ENCODE measurements at regions of chr7 and their contacts with region 1.

Region 1: GRCh38 chr7:142827951-142828500 is 26.9 kb upstream of the EPHB6 start:
- DNase-seq: no peak
- H3K4me3 ChIP-seq: no peak overlapping the region
- H3K27ac ChIP-seq: no peak overlapping the region
- H3K4me1 ChIP-seq: no peaks in the 10 kb centered on the region
- H3K27me3 ChIP-seq: peaks cover 2 to 21% of the 10 kb centered on the region in 2 experiments
- CTCF ChIP-seq: no peak
- POLR2A ChIP-seq: no peak

Region 2: GRCh38 chr7:142535123-142535779 is 292.8 kb before region 1 on chr7:
- CTCF ChIA-PET with region 1: no interaction called
- POLR2A ChIA-PET with region 1: no interaction called
- dilution Hi-C with region 1: no loop called
- intact Hi-C with region 1: no loop called
- DNase-seq: peak; percentile 86
- H3K4me3 ChIP-seq: no peak overlapping the region
- H3K27ac ChIP-seq: peak overlapping the region; percentile 46
- H3K4me1 ChIP-seq: peaks cover 37% of the 10 kb centered on the region
- H3K27me3 ChIP-seq: no peaks in the 10 kb centered on the region
- CTCF ChIP-seq: peak; percentile 87 to 90
- POLR2A ChIP-seq: peak; percentile 45

Region 3: GRCh38 chr7:142646386-142647140 is 181.5 kb before region 1 on chr7:
- CTCF ChIA-PET with region 1: no interaction called
- POLR2A ChIA-PET with region 1: no interaction called
- dilution Hi-C with region 1: no loop called
- intact Hi-C with region 1: loop called (anchors 5 kb)
- DNase-seq: no peak
- H3K4me3 ChIP-seq: no peak overlapping the region
- H3K27ac ChIP-seq: no peak overlapping the region
- H3K4me1 ChIP-seq: no peaks in the 10 kb centered on the region
- H3K27me3 ChIP-seq: peaks cover 16 to 34% of the 10 kb centered on the region in 2 experiments
- CTCF ChIP-seq: no peak
- POLR2A ChIP-seq: no peak

Region 4: DNA sequence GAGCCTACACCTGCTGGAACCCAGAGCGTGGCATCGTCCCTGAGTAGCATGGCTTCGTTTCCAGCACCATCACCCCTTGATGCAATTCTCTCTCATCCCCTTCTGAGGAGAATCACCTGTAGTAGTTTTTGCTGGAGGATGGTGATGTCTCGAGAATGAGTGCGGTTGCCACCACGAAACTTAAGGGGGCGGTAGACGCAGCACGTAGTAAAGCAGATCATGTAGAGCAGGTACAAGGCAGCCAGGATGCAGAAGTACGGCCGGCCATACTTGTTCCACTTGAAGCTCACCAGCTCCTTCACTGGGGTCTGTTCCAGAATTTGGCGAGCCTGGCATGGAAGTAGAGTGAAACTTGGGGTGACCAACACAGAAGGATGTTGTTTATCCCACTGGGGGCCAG is 97.4 kb after region 1 on chr7:
- CTCF ChIA-PET with region 1: no interaction called
- POLR2A ChIA-PET with region 1: no interaction called
- dilution Hi-C with region 1: no loop called
- intact Hi-C with region 1: no loop called
- DNase-seq: no peak
- H3K4me3 ChIP-seq: no peak overlapping the region
- H3K27ac ChIP-seq: no peak overlapping the region
- H3K4me1 ChIP-seq: no peaks in the 10 kb centered on the region
- H3K27me3 ChIP-seq: peaks cover 0 to 2% of the 10 kb centered on the region in 2 experiments
- CTCF ChIP-seq: no peak
- POLR2A ChIP-seq: no peak

Region 5: GRCh38 chr7:143008007-143008901 is 180.2 kb after region 1 on chr7:
- CTCF ChIA-PET with region 1: no interaction called
- POLR2A ChIA-PET with region 1: no interaction called
- dilution Hi-C with region 1: no loop called
- intact Hi-C with region 1: no loop called
- DNase-seq: peak; percentile 62
- H3K4me3 ChIP-seq: no peak overlapping the region
- H3K27ac ChIP-seq: no peak overlapping the region
- H3K4me1 ChIP-seq: peaks cover under 1% of the 10 kb centered on the region
- H3K27me3 ChIP-seq: peaks cover 15 to 18% of the 10 kb centered on the region in 2 experiments
- CTCF ChIP-seq: peak; percentile 88 to 91
- POLR2A ChIP-seq: no peak

Measured in endothelial cell of umbilical vein (primary cell).